GM12878 (cell line): ENCODE measurements at regions of chr11 and their contacts with region 1.

Region 1: DNA sequence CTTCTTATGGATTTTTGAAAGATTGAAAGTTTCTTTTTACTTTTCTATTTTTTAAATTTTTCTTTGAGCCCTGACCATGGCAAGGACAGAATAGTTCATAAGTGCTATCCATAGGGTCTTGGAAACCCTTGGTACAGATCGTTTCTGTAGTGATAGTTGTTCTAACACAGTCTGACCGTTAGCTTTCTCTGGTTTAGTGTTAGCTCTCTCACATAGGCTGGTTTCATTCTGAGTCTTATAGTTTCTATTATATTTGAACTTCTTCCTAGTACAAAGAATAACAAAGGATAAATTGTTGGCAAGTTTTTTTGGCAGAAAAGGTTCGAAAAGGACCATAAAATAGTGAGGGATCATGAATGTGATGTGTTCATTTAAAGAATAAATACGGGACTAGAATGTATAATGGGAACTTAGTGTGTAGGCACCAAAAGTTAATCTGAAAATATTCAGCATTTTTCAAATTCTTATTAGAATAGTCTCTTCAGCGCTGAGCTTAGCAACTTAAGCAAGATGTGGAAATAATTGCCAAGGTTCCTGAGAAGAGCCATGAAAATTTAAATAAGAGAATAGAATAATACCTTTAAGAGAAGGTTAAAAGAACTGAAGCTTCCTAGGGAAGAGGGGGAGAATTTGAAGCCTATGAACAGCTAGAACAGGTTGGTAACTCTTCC is 24.1 kb downstream of the FDX1 start:
- DNase-seq: no peak
- ATAC-seq: peak; percentile 97
- H3K4me3 ChIP-seq: no peak overlapping the region
- H3K27ac ChIP-seq: no peak overlapping the region
- H3K4me1 ChIP-seq: peaks cover 19% of the 10 kb centered on the region
- H3K27me3 ChIP-seq: no peaks in the 10 kb centered on the region
- CTCF ChIP-seq: no peak
- EP300 ChIP-seq: peak in 1 of 2 experiments; percentile 56; a peak in 2 of 4 replicates
- POLR2A ChIP-seq: no peak
- RAD21 ChIP-seq: no peak

Region 2: GRCh38 chr11:110434952-110435779 is 18.7 kb before region 1 on chr11:
- CTCF ChIA-PET with region 1: interaction called, 21 read pairs
- POLR2A ChIA-PET with region 1: interaction called, 3 read pairs
- RAD21 ChIA-PET with region 1: interaction called, 6 read pairs
- SMC1A ChIA-PET with region 1: interaction called, 10 read pairs
- in situ Hi-C with region 1: no loop called
- intact Hi-C with region 1: no loop called
- DNase-seq: no peak
- ATAC-seq: peak; percentile 43
- H3K4me3 ChIP-seq: no peak overlapping the region
- H3K27ac ChIP-seq: no peak overlapping the region
- H3K4me1 ChIP-seq: peaks cover 15% of the 10 kb centered on the region
- H3K27me3 ChIP-seq: no peaks in the 10 kb centered on the region
- CTCF ChIP-seq: peak; percentile 38 to 44 (median 43); a peak in 5 of 6 replicates
- EP300 ChIP-seq: no peak
- POLR2A ChIP-seq: no peak
- RAD21 ChIP-seq: no peak

Region 3: GRCh38 chr11:110525883-110526282 is 72.1 kb after region 1 on chr11:
- CTCF ChIA-PET with region 1: interaction called, 3 read pairs
- POLR2A ChIA-PET with region 1: no interaction called
- RAD21 ChIA-PET with region 1: no interaction called
- SMC1A ChIA-PET with region 1: no interaction called
- in situ Hi-C with region 1: no loop called
- intact Hi-C with region 1: loop called (anchors 5 kb)
- DNase-seq: peak; percentile 15
- ATAC-seq: peak; percentile 70
- H3K4me3 ChIP-seq: no peak overlapping the region
- H3K27ac ChIP-seq: no peak overlapping the region
- H3K4me1 ChIP-seq: peaks cover 5% of the 10 kb centered on the region
- H3K27me3 ChIP-seq: no peaks in the 10 kb centered on the region
- CTCF ChIP-seq: no peak
- EP300 ChIP-seq: no peak
- POLR2A ChIP-seq: no peak
- RAD21 ChIP-seq: no peak

Region 4: DNA sequence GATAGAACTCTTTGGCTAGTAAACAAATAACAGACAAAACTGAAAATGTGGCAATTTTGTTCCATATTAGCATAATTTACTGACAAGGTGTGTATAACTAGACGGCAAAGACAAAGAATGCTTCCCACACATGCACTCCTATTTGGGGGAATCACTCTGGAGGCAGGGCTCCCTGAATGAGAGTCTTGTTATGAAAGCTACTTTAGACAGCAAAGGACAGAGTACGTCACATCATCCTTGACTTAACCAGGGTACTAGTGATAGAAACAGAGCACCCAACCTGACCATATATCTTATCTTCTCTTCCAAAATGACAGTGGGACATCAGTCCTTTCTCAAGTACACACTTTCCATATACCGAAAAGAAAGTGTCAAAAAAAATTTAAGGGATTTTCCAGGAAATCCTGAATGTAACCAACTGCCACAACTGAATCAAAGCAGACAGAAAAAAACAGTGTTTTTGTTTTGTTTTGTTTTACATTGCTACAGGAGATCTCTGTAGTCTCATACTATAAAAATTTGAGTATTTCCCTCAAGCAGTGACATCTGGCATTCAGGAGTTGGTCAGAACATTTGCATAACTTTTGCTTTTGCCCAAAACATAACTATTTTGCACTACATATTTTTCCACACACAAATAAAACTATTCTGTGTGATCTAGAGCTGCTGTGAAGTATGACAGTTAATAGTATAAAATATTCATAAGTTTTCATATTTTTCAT is 159.5 kb after region 1 on chr11:
- CTCF ChIA-PET with region 1: no interaction called
- POLR2A ChIA-PET with region 1: no interaction called
- RAD21 ChIA-PET with region 1: no interaction called
- SMC1A ChIA-PET with region 1: no interaction called
- in situ Hi-C with region 1: no loop called
- intact Hi-C with region 1: no loop called
- DNase-seq: no peak
- ATAC-seq: no peak
- H3K4me3 ChIP-seq: no peak overlapping the region
- H3K27ac ChIP-seq: no peak overlapping the region
- H3K4me1 ChIP-seq: no peaks in the 10 kb centered on the region
- H3K27me3 ChIP-seq: no peaks in the 10 kb centered on the region
- CTCF ChIP-seq: no peak
- EP300 ChIP-seq: no peak
- POLR2A ChIP-seq: no peak
- RAD21 ChIP-seq: no peak